ENCODE measurements at regions of chr5 and their contacts with region 1.

Region 1: DNA sequence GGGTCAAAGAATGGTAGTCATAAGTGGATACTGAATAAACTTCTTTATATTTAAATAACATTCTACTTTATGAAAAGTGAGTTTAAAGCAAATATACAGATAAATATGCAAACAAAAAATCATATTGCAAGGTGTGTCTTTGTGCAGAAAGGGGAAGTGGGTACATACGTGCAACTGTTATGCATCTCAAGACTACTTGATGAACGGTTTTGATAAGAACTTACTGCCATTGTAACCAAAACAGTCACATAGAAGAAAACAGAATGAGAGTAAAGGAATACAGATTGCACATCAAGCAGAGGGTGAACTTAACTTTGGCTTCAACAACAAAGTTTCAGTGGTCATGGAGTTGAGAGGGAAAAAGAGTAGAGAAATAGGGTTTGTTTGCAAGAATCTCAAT is 9.9 kb downstream of the CAMK4 start:
- DNase-seq: peak in 1 of 5 donors; percentile 61
- H3K4me3 ChIP-seq: peak overlapping the region; percentile 16
- H3K4me3 Mint-ChIP-seq: peak overlapping the region; percentile 8 to 80 (median 74)
- H3K27ac ChIP-seq: no peak overlapping the region
- H3K27ac Mint-ChIP-seq: peak overlapping the region; percentile 75 to 99 (median 92)
- H3K4me1 ChIP-seq: peaks cover 95% of the 10 kb centered on the region
- H3K4me1 Mint-ChIP-seq: peaks cover 96 to 100% (median 96%) of the 10 kb centered on the region in 3 donors
- H3K27me3 ChIP-seq: no peaks in the 10 kb centered on the region
- H3K27me3 Mint-ChIP-seq: no peaks in the 10 kb centered on the region

Region 2: DNA sequence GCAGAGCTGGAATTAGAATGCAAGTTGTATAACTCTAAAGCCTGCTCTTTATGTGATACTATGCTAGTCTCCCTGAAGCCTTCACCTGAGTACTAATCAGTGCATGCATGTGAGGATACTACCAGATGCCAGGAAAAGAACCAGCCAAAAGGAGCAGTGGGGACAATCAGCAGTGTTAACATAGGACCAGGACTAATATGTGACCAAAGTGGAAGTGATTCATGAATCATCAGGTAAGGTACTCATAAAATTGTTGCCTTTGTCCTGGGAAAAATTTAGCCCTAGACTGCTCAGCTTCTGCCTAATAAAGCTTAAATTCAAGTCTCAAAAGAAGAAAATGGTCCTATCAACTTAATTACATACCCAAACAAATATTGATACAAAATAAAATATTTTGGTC is 176.1 kb before region 1 on chr5:
- CTCF ChIA-PET with region 1: no interaction called
- POLR2A ChIA-PET with region 1: no interaction called
- DNase-seq: no peak
- H3K4me3 ChIP-seq: no peak overlapping the region
- H3K4me3 Mint-ChIP-seq: no peak overlapping the region
- H3K27ac ChIP-seq: no peak overlapping the region
- H3K27ac Mint-ChIP-seq: no peak overlapping the region
- H3K4me1 ChIP-seq: no peaks in the 10 kb centered on the region
- H3K4me1 Mint-ChIP-seq: no peaks in the 10 kb centered on the region
- H3K27me3 ChIP-seq: peaks cover 6% of the 10 kb centered on the region
- H3K27me3 Mint-ChIP-seq: peaks cover 35 to 56% of the 10 kb centered on the region in 2 donors

Region 3: GRCh38 chr5:111246459-111246858 is 12.3 kb after region 1 on chr5:
- CTCF ChIA-PET with region 1: interaction called, 13 read pairs
- POLR2A ChIA-PET with region 1: no interaction called
- DNase-seq: no peak
- H3K4me3 ChIP-seq: no peak overlapping the region
- H3K4me3 Mint-ChIP-seq: peak overlapping the region in 1 of 7 donors; percentile 12
- H3K27ac ChIP-seq: no peak overlapping the region
- H3K27ac Mint-ChIP-seq: peak overlapping the region in 6 of 8 donors; percentile 12 to 75 (median 50)
- H3K4me1 ChIP-seq: peaks cover 82% of the 10 kb centered on the region
- H3K4me1 Mint-ChIP-seq: peaks cover 70 to 88% (median 87%) of the 10 kb centered on the region in 3 donors
- H3K27me3 ChIP-seq: no peaks in the 10 kb centered on the region
- H3K27me3 Mint-ChIP-seq: no peaks in the 10 kb centered on the region

Measured in CD8-positive, alpha-beta memory T cell (primary cell).